Panc1 (cell line): ENCODE measurements at regions of chr2 and their contacts with region 1.

Region 1: DNA sequence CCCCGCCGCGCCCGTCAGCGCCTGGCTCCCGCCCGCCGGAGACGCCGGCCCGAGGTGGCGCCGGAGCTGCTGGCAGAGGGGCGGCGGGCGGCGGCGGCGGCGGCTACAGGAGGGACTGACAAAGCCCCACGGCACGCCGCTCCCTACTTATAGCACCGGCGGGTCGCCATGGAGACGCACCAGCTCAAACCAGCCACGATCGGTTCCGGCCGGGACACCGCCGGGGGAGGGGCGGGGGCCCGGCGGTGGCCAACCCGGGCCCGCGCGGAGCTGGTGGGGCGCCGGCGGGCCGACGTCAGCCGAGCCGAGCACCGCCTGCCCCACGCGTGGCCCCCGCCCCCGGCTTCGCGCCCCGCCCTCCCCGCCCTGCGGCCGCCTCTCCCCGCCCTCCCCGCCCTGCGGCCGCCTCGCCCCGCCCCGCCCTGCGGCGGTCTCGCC is at the start of gene ODC1:
- DNase-seq: no peak
- ATAC-seq: peak; percentile 92
- H3K4me3 ChIP-seq: peak within 1 kb of the TSS; percentile 92 to 97
- H3K27ac ChIP-seq: peak within 1 kb of the TSS; percentile 95
- H3K4me1 ChIP-seq: peaks cover 33% of the 10 kb centered on the region
- H3K27me3 ChIP-seq: no peaks in the 10 kb centered on the region
- CTCF ChIP-seq: no peak
- total RNA-seq, gene ODC1: 159 TPM

Region 2: DNA sequence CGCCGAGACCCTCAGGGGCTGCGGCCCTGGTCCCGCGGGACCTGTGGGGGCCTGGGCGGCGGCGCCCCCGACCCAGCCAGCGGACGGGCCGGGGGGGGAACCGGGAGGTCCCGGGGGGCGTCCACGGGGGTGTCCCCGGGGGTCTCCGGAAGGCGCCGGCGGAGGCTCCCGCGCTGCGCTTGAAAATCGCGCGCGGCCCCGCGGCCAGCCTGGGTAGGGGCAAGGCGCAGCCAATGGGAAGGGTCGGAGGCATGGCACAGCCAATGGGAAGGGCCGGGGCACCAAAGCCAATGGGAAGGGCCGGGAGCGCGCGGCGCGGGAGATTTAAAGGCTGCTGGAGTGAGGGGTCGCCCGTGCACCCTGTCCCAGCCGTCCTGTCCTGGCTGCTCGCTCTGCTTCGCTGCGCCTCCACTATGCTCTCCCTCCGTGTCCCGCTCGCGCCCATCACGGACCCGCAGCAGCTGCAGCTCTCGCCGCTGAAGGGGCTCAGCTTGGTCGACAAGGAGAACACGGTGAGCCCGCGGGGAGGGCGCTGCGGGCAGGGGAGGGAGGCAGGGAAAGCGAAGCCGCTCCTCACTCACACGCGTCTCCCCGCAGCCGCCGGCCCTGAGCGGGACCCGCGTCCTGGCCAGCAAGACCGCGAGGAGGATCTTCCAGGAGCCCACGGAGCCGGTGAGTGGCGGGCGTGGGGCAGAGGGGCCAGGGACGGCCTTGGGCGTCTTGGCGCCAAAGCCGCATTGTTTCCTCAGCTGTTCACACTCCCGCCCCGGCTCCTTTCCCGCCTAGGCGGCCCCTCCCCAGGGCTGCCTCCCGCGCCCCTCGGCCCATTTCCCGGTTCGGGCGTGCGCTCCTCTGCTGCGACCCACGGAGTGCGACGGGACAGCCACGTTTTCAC is 325.6 kb before region 1 on chr2 and contains the start of gene RRM2:
- CTCF ChIA-PET with region 1: no interaction called
- POLR2A ChIA-PET with region 1: interaction called, 3 read pairs
- in situ Hi-C with region 1: loop called (anchors 25 kb)
- intact Hi-C with region 1: no loop called
- DNase-seq: no peak
- ATAC-seq: peak; percentile 83
- H3K4me3 ChIP-seq: peak within 1 kb of the TSS; percentile 54 to 72
- H3K27ac ChIP-seq: peak within 1 kb of the TSS; percentile 100
- H3K4me1 ChIP-seq: peaks cover 35% of the 10 kb centered on the region
- H3K27me3 ChIP-seq: no peaks in the 10 kb centered on the region
- CTCF ChIP-seq: no peak
- total RNA-seq, gene RRM2: 294 TPM

Region 3: DNA sequence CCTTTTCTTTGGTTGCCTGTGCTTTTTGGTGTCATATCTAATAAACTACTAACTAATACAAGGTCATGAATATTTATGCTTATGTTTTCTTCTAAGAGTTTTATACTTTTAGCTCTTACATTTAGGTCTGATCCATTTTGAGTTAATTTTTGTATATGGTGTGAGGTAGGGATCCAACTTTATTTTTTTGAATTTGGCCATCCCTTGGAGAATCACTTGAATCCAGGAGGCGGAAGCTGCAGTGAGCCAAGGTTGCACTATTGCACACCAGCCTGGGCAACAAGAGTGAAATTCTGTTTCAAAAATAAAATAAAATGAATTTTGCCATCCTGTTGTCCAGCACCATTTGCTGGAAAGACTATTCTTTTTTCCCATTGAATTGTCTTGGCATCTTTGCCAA is 154.2 kb before region 1 on chr2:
- CTCF ChIA-PET with region 1: no interaction called
- POLR2A ChIA-PET with region 1: interaction called, 11 read pairs
- in situ Hi-C with region 1: no loop called
- intact Hi-C with region 1: no loop called
- DNase-seq: no peak
- ATAC-seq: no peak
- H3K4me3 ChIP-seq: no peak overlapping the region
- H3K27ac ChIP-seq: no peak overlapping the region
- H3K4me1 ChIP-seq: peaks cover 24% of the 10 kb centered on the region
- H3K27me3 ChIP-seq: no peaks in the 10 kb centered on the region
- CTCF ChIP-seq: no peak

Region 4: DNA sequence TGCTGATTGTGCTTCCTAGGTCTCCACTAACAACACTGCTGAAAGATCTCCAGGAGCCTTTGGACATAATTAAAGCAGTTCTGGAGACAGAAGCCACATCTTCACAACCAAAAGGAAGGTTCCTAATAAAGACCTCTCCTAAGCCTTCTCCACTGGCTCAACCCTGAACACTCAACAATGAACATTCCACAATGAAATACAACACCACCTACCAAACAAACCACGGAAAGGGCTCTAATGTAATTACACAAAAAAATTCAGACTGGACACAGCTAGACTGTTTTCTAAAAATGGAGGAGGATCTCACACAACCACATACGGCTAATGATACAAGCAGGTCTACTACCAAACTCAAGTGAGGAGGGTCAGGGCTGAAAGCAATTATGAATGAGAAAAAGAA is 197.9 kb after region 1 on chr2:
- CTCF ChIA-PET with region 1: interaction called, 3 read pairs
- POLR2A ChIA-PET with region 1: interaction called, 10 read pairs
- in situ Hi-C with region 1: no loop called
- intact Hi-C with region 1: no loop called
- DNase-seq: no peak
- ATAC-seq: no peak
- H3K4me3 ChIP-seq: no peak overlapping the region
- H3K27ac ChIP-seq: no peak overlapping the region
- H3K4me1 ChIP-seq: no peaks in the 10 kb centered on the region
- H3K27me3 ChIP-seq: no peaks in the 10 kb centered on the region
- CTCF ChIP-seq: no peak

Region 5: DNA sequence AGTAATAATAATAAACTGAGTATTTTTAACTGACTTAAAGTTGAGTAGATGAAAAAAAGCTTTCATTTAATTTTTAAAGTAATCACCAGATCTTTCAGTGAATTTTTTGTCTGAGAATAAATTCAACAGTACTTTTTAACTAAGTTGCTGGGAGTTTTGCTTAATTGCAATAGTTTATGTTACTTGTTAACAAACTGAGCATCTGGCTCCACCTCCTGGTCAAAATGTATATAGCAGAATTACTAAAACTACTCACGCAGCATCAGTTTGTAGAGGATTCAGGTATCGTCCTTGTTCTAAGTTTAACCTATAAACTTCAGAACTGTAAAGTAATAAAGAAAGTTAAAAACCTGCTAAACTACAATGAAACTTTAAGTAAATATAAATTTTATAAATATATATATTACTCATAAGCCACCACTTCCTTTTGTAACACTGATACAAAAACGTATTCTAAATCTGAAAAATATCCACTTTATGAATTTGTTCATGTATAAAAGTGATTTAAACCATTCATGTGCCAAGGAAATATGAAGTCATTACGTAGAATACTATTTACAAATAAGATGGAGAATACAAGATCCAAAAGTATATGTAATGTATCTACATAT is 220.3 kb after region 1 on chr2:
- CTCF ChIA-PET with region 1: no interaction called
- POLR2A ChIA-PET with region 1: no interaction called
- in situ Hi-C with region 1: no loop called
- intact Hi-C with region 1: loop called (anchors 5 kb)
- DNase-seq: peak; percentile 76
- ATAC-seq: no peak
- H3K4me3 ChIP-seq: no peak overlapping the region
- H3K27ac ChIP-seq: no peak overlapping the region
- H3K4me1 ChIP-seq: no peaks in the 10 kb centered on the region
- H3K27me3 ChIP-seq: no peaks in the 10 kb centered on the region
- CTCF ChIP-seq: peak; percentile 74; the same call in 1 of the 2 replicates

Region 6: GRCh38 chr2:10704034-10704594 is 255.9 kb after region 1 on chr2:
- CTCF ChIA-PET with region 1: no interaction called
- POLR2A ChIA-PET with region 1: interaction called, 14 read pairs
- in situ Hi-C with region 1: no loop called
- intact Hi-C with region 1: no loop called
- DNase-seq: no peak
- ATAC-seq: no peak
- H3K4me3 ChIP-seq: no peak overlapping the region
- H3K27ac ChIP-seq: no peak overlapping the region
- H3K4me1 ChIP-seq: no peaks in the 10 kb centered on the region
- H3K27me3 ChIP-seq: no peaks in the 10 kb centered on the region; the same call in 1 of the 2 replicates
- CTCF ChIP-seq: no peak